ENCODE measurements at regions of chr1 and their contacts with region 1.

Region 1: DNA sequence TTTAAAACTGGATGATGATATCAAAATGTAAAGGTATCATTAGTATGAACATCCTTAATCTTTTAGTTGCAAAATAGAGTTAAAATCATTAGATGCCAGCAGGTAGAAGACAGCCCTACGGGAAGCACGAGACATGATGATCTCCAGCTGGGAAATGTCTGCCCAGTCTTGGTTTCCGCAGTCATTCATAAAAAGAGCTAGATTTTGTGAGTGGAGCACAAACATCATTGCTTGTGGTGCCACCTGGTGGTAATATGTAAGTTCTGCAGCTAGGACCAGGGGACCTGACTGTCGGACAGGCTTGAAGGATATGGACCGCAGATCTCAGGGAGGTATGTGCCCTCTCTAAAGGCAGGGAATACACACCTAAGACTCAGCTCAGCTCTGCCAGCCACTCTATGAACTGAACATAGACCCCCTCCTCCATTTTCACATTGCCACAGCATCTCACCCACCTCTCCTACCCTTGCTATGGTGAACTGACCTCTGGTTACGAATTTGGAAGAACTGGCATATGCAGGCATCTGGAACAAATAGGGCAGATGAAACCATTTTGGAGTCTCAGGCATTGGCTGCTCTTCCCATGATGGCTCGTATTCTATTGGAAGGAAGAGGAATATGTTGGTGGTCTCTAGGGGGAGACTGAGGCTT is 9.2 kb downstream of the FCMR start:
- DNase-seq: peak; percentile 81
- H3K4me3 Mint-ChIP-seq: no peak overlapping the region
- H3K27ac Mint-ChIP-seq: peak overlapping the region; percentile 47
- H3K4me1 Mint-ChIP-seq: peaks cover 84% of the 10 kb centered on the region
- H3K27me3 Mint-ChIP-seq: no peaks in the 10 kb centered on the region

Region 2: DNA sequence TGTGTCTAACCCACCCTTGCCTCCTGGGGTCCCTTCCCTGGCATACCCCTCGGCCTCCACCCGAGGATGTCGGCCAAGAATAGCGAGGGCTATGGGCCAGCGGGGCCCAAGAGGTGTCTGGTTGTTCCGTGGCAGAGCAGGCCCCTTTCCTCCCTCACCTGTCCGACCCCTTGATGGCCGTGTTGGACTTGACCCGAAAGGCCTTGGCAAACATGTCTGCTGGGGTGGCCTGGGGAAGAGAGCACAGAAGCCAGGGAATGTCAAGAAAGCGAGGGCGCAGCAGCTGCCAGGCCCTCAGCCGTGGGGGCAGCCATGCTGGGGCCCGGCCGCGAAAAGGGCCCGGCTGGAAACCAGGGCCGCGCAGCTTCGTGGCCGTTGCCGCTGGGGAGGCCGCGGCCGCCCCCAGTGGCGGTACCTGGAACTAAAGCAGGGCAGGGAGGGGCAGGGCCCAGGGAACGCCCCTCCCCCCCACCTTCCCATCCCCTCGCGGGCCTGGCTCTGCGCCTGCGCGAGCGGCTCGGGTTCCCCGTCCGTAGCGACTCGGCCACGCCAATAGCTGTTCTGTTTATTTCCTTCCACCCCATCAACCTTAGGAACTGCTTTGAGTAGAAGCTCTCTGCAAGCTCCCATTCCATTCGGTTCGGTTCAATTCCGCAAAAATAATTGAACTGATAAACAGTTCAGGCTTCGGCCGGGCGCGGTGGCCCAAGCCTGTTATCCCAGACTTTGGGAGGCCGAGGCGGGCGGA is 300.3 kb before region 1 on chr1 and contains the start of gene EIF2D:
- CTCF ChIA-PET with region 1: interaction called, 5 read pairs
- intact Hi-C with region 1: loop called (anchors 2 kb)
- DNase-seq: peak; percentile 95
- H3K4me3 Mint-ChIP-seq: peak within 1 kb of the TSS; percentile 92
- H3K27ac Mint-ChIP-seq: peak within 1 kb of the TSS; percentile 99
- H3K4me1 Mint-ChIP-seq: peaks cover 44% of the 10 kb centered on the region
- H3K27me3 Mint-ChIP-seq: no peaks in the 10 kb centered on the region
- total RNA-seq, gene EIF2D: 116 to 122 TPM

Region 3: GRCh38 chr1:206761159-206761768 is 151.3 kb before region 1 on chr1:
- CTCF ChIA-PET with region 1: interaction called, 17 read pairs
- intact Hi-C with region 1: no loop called
- DNase-seq: no peak
- H3K4me3 Mint-ChIP-seq: no peak overlapping the region
- H3K27ac Mint-ChIP-seq: no peak overlapping the region
- H3K4me1 Mint-ChIP-seq: peaks cover 22% of the 10 kb centered on the region
- H3K27me3 Mint-ChIP-seq: no peaks in the 10 kb centered on the region

Region 4: GRCh38 chr1:206814716-206815341 is 97.7 kb before region 1 on chr1:
- CTCF ChIA-PET with region 1: interaction called, 157 read pairs
- intact Hi-C with region 1: no loop called
- DNase-seq: no peak
- H3K4me3 Mint-ChIP-seq: no peak overlapping the region
- H3K27ac Mint-ChIP-seq: no peak overlapping the region
- H3K4me1 Mint-ChIP-seq: peaks cover 21% of the 10 kb centered on the region
- H3K27me3 Mint-ChIP-seq: no peaks in the 10 kb centered on the region

Region 5: DNA sequence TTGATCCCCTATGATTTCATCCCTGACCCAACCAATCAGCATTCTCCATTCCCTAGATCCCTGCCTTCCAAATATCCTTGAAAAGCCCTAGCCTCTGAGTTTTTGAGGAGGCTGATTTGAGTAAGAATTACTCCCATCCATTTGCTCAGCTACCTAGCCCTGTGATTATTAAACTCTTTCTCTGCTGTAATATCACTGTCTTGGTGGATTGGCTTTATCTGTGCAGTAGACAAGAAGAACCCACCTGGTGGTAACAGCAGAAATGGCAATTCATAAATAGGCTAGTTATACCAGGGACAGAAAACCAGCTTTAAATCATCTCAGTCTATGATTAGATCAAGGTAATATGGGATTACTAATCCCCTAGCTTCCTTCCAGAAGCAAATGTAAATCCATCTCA is 34.1 kb before region 1 on chr1:
- CTCF ChIA-PET with region 1: interaction called, 14 read pairs
- intact Hi-C with region 1: no loop called
- DNase-seq: no peak
- H3K4me3 Mint-ChIP-seq: no peak overlapping the region
- H3K27ac Mint-ChIP-seq: no peak overlapping the region
- H3K4me1 Mint-ChIP-seq: no peaks in the 10 kb centered on the region
- H3K27me3 Mint-ChIP-seq: no peaks in the 10 kb centered on the region

Region 6: GRCh38 chr1:206925106-206925736 is 12.7 kb after region 1 on chr1:
- CTCF ChIA-PET with region 1: interaction called, 219 read pairs
- intact Hi-C with region 1: no loop called
- DNase-seq: peak; percentile 78
- H3K4me3 Mint-ChIP-seq: no peak overlapping the region
- H3K27ac Mint-ChIP-seq: no peak overlapping the region
- H3K4me1 Mint-ChIP-seq: peaks cover 24% of the 10 kb centered on the region
- H3K27me3 Mint-ChIP-seq: no peaks in the 10 kb centered on the region

Region 7: DNA sequence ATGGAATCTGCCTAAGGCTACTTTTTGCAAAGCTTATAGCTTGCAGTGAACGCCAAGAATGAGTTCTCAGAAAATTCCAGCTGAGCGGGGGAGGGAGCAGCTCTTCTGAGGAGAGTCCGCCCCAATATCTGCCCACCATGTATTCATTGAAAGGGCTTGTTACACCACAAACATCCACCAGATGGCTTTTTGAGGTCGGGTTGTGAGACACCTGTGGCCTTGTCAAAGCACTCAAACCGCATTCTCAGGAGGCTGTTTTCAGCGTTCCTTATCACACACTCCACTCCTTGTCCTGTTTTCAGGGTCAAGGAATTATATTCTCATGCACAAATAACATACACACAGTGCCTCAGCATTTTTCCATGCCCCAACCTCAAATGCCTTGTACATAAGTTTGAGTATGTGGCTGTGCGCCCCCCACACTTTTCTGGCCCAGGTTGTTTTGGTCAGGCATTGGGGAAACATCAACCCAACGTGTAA is 172.2 kb after region 1 on chr1:
- CTCF ChIA-PET with region 1: no interaction called
- intact Hi-C with region 1: no loop called
- DNase-seq: peak; percentile 73
- H3K4me3 Mint-ChIP-seq: no peak overlapping the region
- H3K27ac Mint-ChIP-seq: no peak overlapping the region
- H3K4me1 Mint-ChIP-seq: peaks cover 23% of the 10 kb centered on the region
- H3K27me3 Mint-ChIP-seq: no peaks in the 10 kb centered on the region

Region 8: GRCh38 chr1:207499573-207499972 is 587.0 kb after region 1 on chr1:
- CTCF ChIA-PET with region 1: interaction called, 7 read pairs
- intact Hi-C with region 1: loop called (anchors 2 kb)
- DNase-seq: peak; percentile 88
- H3K4me3 Mint-ChIP-seq: no peak overlapping the region
- H3K27ac Mint-ChIP-seq: peak overlapping the region; percentile 51
- H3K4me1 Mint-ChIP-seq: peaks cover 26% of the 10 kb centered on the region
- H3K27me3 Mint-ChIP-seq: peaks cover 25% of the 10 kb centered on the region

Measured in activated naive CD4-positive, alpha-beta T cell treated with anti-CD3 and anti-CD28 coated beads for 36 hours (primary cell).